ENCODE measurements at regions of chr9 and their contacts with region 1.

Region 1: GRCh38 chr9:125484350-125485282 is 222.4 kb downstream of the MAPKAP1 start:
- DNase-seq: peak; percentile 91
- H3K4me3 ChIP-seq: no peak overlapping the region
- H3K27ac ChIP-seq: peak overlapping the region; percentile 72 to 80 (median 78)
- H3K4me1 ChIP-seq: peaks cover 28 to 46% (median 41%) of the 10 kb centered on the region in 4 donors
- H3K27me3 ChIP-seq: no peaks in the 10 kb centered on the region
- CTCF ChIP-seq: no peak
- EP300 ChIP-seq: no peak
- POLR2A ChIP-seq: no peak

Region 2: DNA sequence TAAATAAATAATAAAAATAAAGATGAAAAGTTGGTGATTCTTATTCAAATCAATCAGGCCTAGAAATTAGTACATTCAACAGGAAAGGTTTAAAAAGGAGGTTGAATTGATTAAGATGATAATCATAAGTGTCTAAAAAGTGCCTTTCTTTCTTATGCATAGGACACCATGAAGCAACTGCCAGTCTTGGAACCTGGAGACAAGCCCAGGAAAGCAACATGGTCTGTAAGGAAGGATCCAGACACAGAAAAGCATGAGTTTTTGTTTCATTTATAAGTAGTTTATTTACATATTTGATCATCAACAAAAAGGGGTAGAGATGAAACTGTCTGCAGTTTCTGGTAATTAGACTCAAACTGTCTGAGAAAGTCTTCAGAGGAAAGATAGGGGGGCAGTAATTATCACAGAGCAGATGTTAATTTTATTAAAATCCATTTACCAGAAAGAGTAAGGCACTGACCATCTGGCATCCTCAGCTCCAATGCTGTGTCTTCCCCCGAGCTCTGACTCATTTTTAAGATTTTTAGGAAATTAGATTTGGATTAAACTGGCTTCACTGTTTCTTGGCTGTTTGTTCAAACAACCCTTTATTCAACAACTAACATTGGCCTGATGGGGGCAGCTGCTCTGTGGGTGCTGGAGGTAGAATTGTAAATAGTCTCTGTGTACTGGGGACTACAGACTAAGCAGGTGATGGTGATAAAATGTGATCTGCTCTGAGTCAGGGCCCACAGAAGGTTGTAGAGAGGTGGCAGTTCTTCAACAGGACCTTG is 281.6 kb before region 1 on chr9:
- intact Hi-C with region 1: no loop called
- DNase-seq: no peak
- H3K4me3 ChIP-seq: no peak overlapping the region
- H3K27ac ChIP-seq: no peak overlapping the region
- H3K4me1 ChIP-seq: peaks cover 13 to 31% (median 16%) of the 10 kb centered on the region in 4 donors
- H3K27me3 ChIP-seq: no peaks in the 10 kb centered on the region
- CTCF ChIP-seq: no peak
- EP300 ChIP-seq: no peak
- POLR2A ChIP-seq: no peak

Region 3: GRCh38 chr9:125549891-125550885 is 65.6 kb after region 1 on chr9:
- intact Hi-C with region 1: loop called (anchors 5 kb)
- DNase-seq: no peak
- H3K4me3 ChIP-seq: peak overlapping the region in 2 of 4 donors; percentile 8 to 28
- H3K27ac ChIP-seq: peak overlapping the region; percentile 61 to 75 (median 70)
- H3K4me1 ChIP-seq: peaks cover 47 to 72% (median 68%) of the 10 kb centered on the region in 4 donors
- H3K27me3 ChIP-seq: no peaks in the 10 kb centered on the region
- CTCF ChIP-seq: no peak
- EP300 ChIP-seq: no peak
- POLR2A ChIP-seq: no peak

Region 4: DNA sequence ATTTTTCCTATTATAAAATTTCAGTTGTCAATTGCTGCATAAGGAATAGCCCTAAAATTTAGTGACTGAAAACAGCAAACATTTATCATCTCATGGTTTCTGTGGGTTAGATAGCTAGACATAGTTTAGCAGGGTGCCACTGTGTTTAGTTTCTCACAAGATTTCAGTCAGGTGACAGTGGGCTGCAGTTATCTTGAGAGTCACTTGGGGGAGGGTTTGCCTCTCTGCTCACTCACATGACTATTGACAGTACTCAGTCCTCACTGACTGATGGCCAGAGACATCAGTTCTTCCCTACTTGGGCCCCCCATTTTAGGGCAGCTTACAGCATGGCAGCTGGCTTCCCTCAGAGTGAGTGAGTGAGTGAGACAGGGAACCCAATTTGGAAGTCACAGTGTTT is 304.6 kb after region 1 on chr9:
- intact Hi-C with region 1: no loop called
- DNase-seq: no peak
- H3K4me3 ChIP-seq: no peak overlapping the region
- H3K27ac ChIP-seq: no peak overlapping the region
- H3K4me1 ChIP-seq: peaks cover 9 to 17% (median 14%) of the 10 kb centered on the region in 4 donors
- H3K27me3 ChIP-seq: no peaks in the 10 kb centered on the region
- CTCF ChIP-seq: no peak
- EP300 ChIP-seq: no peak
- POLR2A ChIP-seq: no peak

Measured in esophagus muscularis mucosa (tissue), 4 donors.